CD14-positive monocyte (primary cell): ENCODE measurements at regions of chr5 and their contacts with region 1.

Region 1: GRCh38 chr5:31581498-31582099 is 49.5 kb downstream of the C5orf22 start:
- DNase-seq: peak in 2 of 3 donors; percentile 23 to 34
- H3K4me3 ChIP-seq: no peak overlapping the region
- H3K4me3 Mint-ChIP-seq: no peak overlapping the region
- H3K27ac ChIP-seq: no peak overlapping the region
- H3K27ac Mint-ChIP-seq: no peak overlapping the region
- H3K4me1 ChIP-seq: peaks cover 18% of the 10 kb centered on the region in 2 donors
- H3K4me1 Mint-ChIP-seq: peaks cover 17% of the 10 kb centered on the region
- H3K27me3 ChIP-seq: no peaks in the 10 kb centered on the region
- H3K27me3 Mint-ChIP-seq: peaks cover 1 to 5% (median 3%) of the 10 kb centered on the region in 3 donors
- CTCF ChIP-seq: peak; percentile 72

Region 2: GRCh38 chr5:32092938-32093812 is 511.6 kb after region 1 on chr5:
- intact Hi-C with region 1: loop called (anchors 2 to 5 kb)
- DNase-seq: peak; percentile 18 to 52 (median 48)
- H3K4me3 ChIP-seq: no peak overlapping the region
- H3K4me3 Mint-ChIP-seq: no peak overlapping the region
- H3K27ac ChIP-seq: no peak overlapping the region
- H3K27ac Mint-ChIP-seq: no peak overlapping the region
- H3K4me1 ChIP-seq: no peaks in the 10 kb centered on the region
- H3K4me1 Mint-ChIP-seq: peaks cover 6% of the 10 kb centered on the region
- H3K27me3 ChIP-seq: no peaks in the 10 kb centered on the region
- H3K27me3 Mint-ChIP-seq: no peaks in the 10 kb centered on the region
- CTCF ChIP-seq: peak; percentile 81